Activated CD4-positive, alpha-beta memory T cell treated with anti-CD3 and anti-CD28 coated beads, Interleukin-2, amount 10 ng/mL, durations not matched to agents 7 days and 5 days (primary cell): ENCODE measurements at regions of chr5 and their contacts with region 1.

Region 1: GRCh38 chr5:58886315-58887207 is 303.7 kb downstream of the RAB3C start:
- DNase-seq: peak; percentile 70
- H3K4me3 Mint-ChIP-seq: no peak overlapping the region
- H3K27ac Mint-ChIP-seq: peak overlapping the region; percentile 75
- H3K4me1 Mint-ChIP-seq: peaks cover 41% of the 10 kb centered on the region
- H3K27me3 Mint-ChIP-seq: peaks cover 4% of the 10 kb centered on the region

Region 2: GRCh38 chr5:58871648-58872242 is 14.8 kb before region 1 on chr5:
- CTCF ChIA-PET with region 1: interaction called, 30 read pairs
- POLR2A ChIA-PET with region 1: no interaction called
- DNase-seq: no peak
- H3K4me3 Mint-ChIP-seq: no peak overlapping the region
- H3K27ac Mint-ChIP-seq: no peak overlapping the region
- H3K4me1 Mint-ChIP-seq: no peaks in the 10 kb centered on the region
- H3K27me3 Mint-ChIP-seq: peaks cover 33% of the 10 kb centered on the region

Region 3: GRCh38 chr5:59126708-59127573 is 240.4 kb after region 1 on chr5:
- CTCF ChIA-PET with region 1: interaction called, 11 read pairs
- POLR2A ChIA-PET with region 1: no interaction called
- DNase-seq: no peak
- H3K4me3 Mint-ChIP-seq: no peak overlapping the region
- H3K27ac Mint-ChIP-seq: no peak overlapping the region
- H3K4me1 Mint-ChIP-seq: peaks cover 19% of the 10 kb centered on the region
- H3K27me3 Mint-ChIP-seq: no peaks in the 10 kb centered on the region

Region 4: GRCh38 chr5:59180515-59180914 is 294.0 kb after region 1 on chr5:
- CTCF ChIA-PET with region 1: interaction called, 68 read pairs
- POLR2A ChIA-PET with region 1: no interaction called
- DNase-seq: no peak
- H3K4me3 Mint-ChIP-seq: no peak overlapping the region
- H3K27ac Mint-ChIP-seq: no peak overlapping the region
- H3K4me1 Mint-ChIP-seq: peaks cover 22% of the 10 kb centered on the region
- H3K27me3 Mint-ChIP-seq: peaks cover 19% of the 10 kb centered on the region

Region 5: GRCh38 chr5:59380350-59380951 is 493.9 kb after region 1 on chr5:
- CTCF ChIA-PET with region 1: interaction called, 17 read pairs
- POLR2A ChIA-PET with region 1: no interaction called
- DNase-seq: peak; percentile 22
- H3K4me3 Mint-ChIP-seq: no peak overlapping the region
- H3K27ac Mint-ChIP-seq: no peak overlapping the region
- H3K4me1 Mint-ChIP-seq: peaks cover 3% of the 10 kb centered on the region
- H3K27me3 Mint-ChIP-seq: peaks cover 9% of the 10 kb centered on the region